ENCODE measurements at regions of chr2 and their contacts with region 1.

Region 1: GRCh38 chr2:130768191-130768855 is 13.0 kb downstream of the AMER3 start:
- DNase-seq: no peak
- H3K4me3 ChIP-seq: no peak overlapping the region
- H3K27ac ChIP-seq: no peak overlapping the region
- H3K4me1 ChIP-seq: no peaks in the 10 kb centered on the region
- H3K27me3 ChIP-seq: peaks cover 0 to 5% of the 10 kb centered on the region in 2 donors
- CTCF ChIP-seq: no peak
- POLR2A ChIP-seq: no peak

Region 2: DNA sequence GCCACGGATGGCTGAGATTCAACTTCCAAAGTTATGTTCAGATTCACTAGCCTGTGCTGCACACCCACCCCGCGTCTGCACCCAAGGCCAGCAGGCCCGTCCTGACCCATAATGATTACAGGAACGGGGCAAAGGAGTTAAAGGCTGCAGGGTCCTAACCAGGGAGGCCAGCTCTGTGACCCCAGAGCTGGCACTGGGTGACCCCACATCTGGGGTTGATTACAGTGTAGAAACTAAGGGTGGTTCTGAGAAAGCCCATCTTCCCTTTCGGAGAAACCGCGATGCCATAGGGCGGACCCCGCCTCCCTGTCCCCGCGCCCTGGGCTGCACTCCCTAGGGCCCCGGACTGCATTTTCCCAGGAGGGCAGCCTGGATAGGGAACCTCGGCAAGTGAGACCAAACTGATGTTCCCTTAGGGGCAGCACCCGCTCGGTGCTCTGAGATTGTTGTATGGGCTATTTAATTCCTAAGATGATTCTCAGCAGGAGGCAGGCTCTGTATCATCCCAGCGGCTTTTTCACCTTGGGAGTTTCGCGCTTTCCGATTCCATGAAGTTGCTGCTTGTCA is 41.6 kb before region 1 on chr2:
- intact Hi-C with region 1: loop called (anchors 1 kb)
- DNase-seq: no peak
- H3K4me3 ChIP-seq: peak overlapping the region; percentile 44 to 70 (median 59)
- H3K27ac ChIP-seq: peak overlapping the region; percentile 53 to 65
- H3K4me1 ChIP-seq: peaks cover 0 to 7% of the 10 kb centered on the region in 2 donors
- H3K27me3 ChIP-seq: peaks cover 0 to 3% of the 10 kb centered on the region in 2 donors
- CTCF ChIP-seq: no peak
- POLR2A ChIP-seq: no peak